ENCODE measurements at regions of chr16 and their contacts with region 1.

Region 1: DNA sequence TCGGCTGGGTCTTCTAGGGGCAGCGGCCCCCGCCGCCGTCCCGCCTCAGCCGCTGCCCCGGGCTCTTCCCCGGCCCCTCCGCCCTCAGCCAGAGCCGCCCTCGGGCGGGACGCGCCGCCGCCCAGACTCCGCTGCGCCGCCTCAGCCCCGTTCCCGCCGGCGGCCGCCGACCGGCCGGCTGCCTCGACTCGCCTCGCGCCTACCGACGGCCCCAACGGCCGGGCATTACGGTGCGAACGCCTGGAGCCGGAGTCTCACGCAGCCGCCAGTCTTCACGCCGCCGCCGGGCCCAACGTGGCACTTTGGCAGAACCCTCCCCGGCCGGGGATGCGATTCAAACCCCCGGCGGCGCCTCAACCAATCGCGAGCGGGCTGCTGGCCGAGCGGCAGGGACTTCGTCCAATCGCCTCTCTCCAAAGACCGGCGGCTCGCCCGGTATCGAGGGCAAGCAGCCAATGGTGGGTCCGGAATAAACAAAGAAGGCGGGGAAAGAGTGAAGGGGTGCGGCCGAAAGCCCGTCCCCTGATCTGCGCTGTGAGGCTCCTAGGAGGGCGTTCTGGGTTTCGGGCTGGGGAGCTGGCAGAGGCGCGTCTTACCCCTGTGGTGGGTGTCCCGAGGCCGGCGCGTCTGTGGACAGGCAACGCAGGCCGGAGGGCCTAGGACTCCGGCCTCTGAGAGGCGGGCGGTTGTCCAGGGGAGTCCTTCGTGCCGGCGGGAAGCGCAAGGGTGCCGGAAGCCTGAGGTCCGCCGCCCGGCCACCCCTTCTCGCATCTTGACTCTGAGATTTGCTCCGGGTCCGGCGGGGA is at the start of gene CDR2:
- DNase-seq: peak; percentile 98 to 99
- ATAC-seq: peak; percentile 97 to 98 (median 98)
- H3K4me3 ChIP-seq: peak within 1 kb of the TSS; percentile 96
- H3K27ac ChIP-seq: peak within 1 kb of the TSS; percentile 77
- H3K4me1 ChIP-seq: peaks cover 10% of the 10 kb centered on the region
- H3K27me3 ChIP-seq: no peaks in the 10 kb centered on the region
- CTCF ChIP-seq: no peak
- total RNA-seq, gene CDR2: 4.0 to 11.9 (median 4.5) TPM

Region 2: DNA sequence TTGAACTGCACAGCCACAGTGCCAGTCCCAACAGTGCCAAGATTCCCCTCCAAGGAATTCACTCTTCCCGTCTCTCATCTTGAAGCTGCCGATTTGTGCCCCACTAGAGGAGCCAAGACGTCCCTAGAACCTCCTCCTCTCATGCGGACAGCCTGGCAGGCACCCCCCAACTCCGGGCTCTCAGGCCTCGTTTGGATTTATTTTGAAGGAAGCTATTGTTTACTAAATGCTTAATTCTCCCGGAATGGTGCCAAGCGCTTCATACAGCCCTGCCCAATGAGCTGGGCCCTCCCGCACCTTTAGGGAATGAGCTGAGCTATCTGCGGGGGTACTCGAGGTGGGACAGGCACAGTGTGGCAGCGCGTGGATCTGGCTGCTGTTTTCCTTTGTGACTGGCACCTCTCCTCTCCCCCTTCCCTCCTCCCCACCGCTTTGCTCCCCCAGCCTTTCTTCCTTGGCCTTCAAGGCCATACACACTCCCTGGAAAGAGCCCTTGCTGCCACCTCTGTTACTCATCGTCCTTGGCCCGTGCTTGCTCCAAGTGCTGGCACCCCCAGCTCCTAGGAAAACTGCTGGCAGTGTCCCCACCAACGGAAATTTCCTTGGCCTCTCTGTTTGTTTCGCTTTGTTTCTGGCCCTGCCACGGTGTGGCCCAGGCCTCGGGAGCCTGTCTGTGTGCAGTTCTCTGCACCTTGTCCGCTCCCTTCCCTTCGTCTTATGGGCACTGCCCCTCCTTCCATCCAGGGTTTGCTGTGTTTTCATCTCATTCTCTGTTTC is 49.8 kb after region 1 on chr16:
- intact Hi-C with region 1: loop called (anchors 10 kb)
- DNase-seq: peak; percentile 74 to 85
- ATAC-seq: peak; percentile 73 to 93 (median 86)
- H3K4me3 ChIP-seq: peak overlapping the region; percentile 60
- H3K27ac ChIP-seq: peak overlapping the region; percentile 76
- H3K4me1 ChIP-seq: peaks cover 17% of the 10 kb centered on the region
- H3K27me3 ChIP-seq: no peaks in the 10 kb centered on the region
- CTCF ChIP-seq: no peak

Region 3: DNA sequence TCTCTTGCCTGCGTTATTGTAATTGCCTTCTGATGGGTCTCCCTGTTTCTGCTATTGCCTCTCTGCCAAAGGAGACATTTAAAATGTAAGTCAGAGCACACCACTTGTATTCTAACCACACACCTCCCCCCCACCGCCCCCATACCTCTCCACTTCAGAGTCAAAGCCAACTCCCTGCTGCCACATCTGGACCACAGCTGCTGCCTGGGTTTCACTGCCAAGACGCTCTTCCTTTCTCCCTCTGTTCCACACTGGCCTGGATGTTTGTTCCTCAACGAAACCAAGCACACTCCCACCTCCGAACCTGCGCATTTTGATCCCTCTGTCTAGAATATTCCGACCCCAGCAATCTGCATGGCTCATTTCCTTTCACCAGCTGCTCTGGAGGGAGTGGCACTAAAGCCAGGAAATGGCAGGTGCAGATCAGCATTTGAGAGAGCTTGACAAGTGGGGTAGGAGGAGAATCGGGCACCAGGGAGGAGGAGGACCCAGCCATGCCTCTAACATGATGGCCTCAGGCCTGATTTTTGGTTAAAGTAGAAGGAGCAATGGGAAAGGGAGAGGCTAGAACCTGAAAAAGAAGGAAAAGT is 347.1 kb after region 1 on chr16:
- intact Hi-C with region 1: no loop called
- DNase-seq: no peak
- ATAC-seq: no peak
- H3K4me3 ChIP-seq: no peak overlapping the region
- H3K27ac ChIP-seq: no peak overlapping the region
- H3K4me1 ChIP-seq: no peaks in the 10 kb centered on the region
- H3K27me3 ChIP-seq: peaks cover 0 to 3% (median 0%) of the 10 kb centered on the region in 3 donors
- CTCF ChIP-seq: no peak

Measured in psoas muscle (tissue), 8 donors.